Caco-2 (cell line): ENCODE measurements at regions of chr6 and their contacts with region 1.

Region 1: DNA sequence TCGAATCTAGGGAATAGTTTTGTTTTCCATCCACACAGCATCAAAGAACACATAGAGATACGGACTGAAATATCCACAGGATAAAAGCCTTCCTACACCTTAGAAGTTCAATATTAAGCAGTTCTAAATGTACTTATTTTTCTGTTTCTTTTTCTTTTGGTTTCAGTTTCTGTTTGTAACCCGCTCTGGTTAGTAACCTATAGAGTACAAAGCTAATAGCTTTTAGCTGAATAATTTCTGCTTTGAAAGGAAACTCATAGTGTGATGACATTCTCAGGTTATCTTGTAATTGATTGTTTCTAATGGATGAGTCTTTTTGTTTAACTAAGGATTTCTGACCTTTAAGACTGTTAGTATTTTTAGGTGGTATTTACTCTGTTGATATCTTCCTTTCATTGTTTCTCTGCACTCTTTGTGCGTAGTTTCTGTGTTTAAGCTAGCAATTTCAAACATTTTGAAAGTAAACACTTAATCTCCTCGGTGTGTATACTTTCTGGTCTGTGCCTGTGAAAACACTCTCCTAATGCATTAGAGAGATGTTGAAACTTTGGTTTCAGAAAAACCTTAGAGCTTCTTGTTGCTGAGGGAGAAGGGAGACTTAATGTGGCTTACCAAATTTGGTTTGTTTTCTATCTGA is 385.5 kb downstream of the HDGFL1 start:
- DNase-seq: peak in 1 of 2 experiments; percentile 51
- H3K4me3 ChIP-seq: 0 out of 2 replicates have a peak overlapping the region, but pooled peaks have one; percentile 13
- H3K4me3 Mint-ChIP-seq: peak overlapping the region; percentile 70
- H3K27ac Mint-ChIP-seq: peak overlapping the region; percentile 93
- H3K4me1 ChIP-seq: peaks cover 48% of the 10 kb centered on the region
- H3K4me1 Mint-ChIP-seq: peaks cover 34% of the 10 kb centered on the region
- H3K27me3 ChIP-seq: no peaks in the 10 kb centered on the region
- H3K27me3 Mint-ChIP-seq: no peaks in the 10 kb centered on the region
- CTCF ChIP-seq: no peak

Region 2: GRCh38 chr6:22424196-22424595 is 530.7 kb before region 1 on chr6:
- CTCF ChIA-PET with region 1: no interaction called
- POLR2A ChIA-PET with region 1: no interaction called
- intact Hi-C with region 1: no loop called
- DNase-seq: no peak
- H3K4me3 ChIP-seq: no peak overlapping the region
- H3K4me3 Mint-ChIP-seq: no peak overlapping the region
- H3K27ac Mint-ChIP-seq: no peak overlapping the region
- H3K4me1 ChIP-seq: 0 out of 2 replicates have a peak, but pooled peaks cover 6% of the 10 kb centered on the region
- H3K4me1 Mint-ChIP-seq: peaks cover 11% of the 10 kb centered on the region
- H3K27me3 ChIP-seq: no peaks in the 10 kb centered on the region
- H3K27me3 Mint-ChIP-seq: no peaks in the 10 kb centered on the region
- CTCF ChIP-seq: no peak

Region 3: DNA sequence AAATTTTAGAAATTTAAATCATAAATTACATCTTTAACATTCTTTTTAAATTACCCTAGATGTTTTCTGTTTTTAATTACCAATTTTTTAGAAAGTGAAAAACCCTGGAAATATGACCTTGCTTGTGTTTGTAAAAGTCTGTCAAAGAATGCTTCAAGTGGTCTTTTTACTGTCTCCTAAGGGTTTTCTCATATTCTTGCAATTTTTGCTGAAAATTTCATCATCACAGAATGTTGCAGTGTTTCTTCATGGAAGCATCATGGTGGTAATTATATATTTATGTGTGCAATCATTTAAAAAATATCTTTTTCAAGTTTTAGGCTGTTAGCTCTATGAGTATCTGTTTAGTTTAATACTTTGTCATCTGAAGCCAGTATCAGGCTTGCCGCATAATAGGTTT is 207.3 kb before region 1 on chr6:
- CTCF ChIA-PET with region 1: no interaction called
- POLR2A ChIA-PET with region 1: no interaction called
- intact Hi-C with region 1: loop called (anchors 1 kb)
- DNase-seq: no peak
- H3K4me3 ChIP-seq: no peak overlapping the region
- H3K4me3 Mint-ChIP-seq: no peak overlapping the region
- H3K27ac Mint-ChIP-seq: no peak overlapping the region
- H3K4me1 ChIP-seq: peaks cover 15% of the 10 kb centered on the region
- H3K4me1 Mint-ChIP-seq: peaks cover 18% of the 10 kb centered on the region
- H3K27me3 ChIP-seq: no peaks in the 10 kb centered on the region
- H3K27me3 Mint-ChIP-seq: no peaks in the 10 kb centered on the region
- CTCF ChIP-seq: no peak

Region 4: DNA sequence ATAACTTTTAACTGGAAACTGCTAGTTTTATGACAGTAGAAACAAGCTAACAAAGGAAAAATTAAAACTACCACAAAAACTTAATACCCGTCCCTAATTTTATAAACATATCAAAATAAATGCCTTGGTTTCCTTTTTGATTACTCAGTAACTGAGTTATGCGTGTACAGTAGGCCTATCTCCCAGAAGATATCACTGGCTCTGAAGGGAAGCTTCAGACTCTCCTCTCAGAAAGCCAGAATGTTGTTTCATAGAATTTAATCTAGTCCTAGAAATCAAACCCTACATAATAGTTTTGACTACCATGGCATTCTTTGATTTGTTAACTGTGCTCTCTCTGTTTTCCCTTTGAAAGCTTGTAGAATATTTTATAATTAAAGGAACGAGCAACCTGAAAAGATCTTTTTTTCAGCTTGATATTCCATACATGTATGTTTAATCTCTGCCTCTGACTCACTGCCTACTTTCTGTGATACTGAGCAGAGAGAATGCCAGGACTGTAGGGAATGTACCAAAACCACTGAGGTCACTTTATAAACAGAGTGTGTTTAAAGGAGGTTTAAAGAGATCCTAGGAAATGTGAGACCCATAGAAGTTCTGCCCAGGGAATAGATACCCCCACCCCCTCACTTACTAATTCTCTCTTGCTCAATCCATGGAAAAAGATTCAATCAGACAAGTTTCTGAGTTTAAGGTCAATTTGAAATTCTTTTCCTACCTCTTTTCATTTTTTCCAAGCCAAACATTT is 74.0 kb before region 1 on chr6:
- CTCF ChIA-PET with region 1: no interaction called
- POLR2A ChIA-PET with region 1: no interaction called
- intact Hi-C with region 1: loop called (anchors 1 kb)
- DNase-seq: peak; percentile 49 to 68
- H3K4me3 ChIP-seq: no peak overlapping the region
- H3K4me3 Mint-ChIP-seq: peak overlapping the region; percentile 67
- H3K27ac Mint-ChIP-seq: peak overlapping the region; percentile 77
- H3K4me1 ChIP-seq: peaks cover 59% of the 10 kb centered on the region
- H3K4me1 Mint-ChIP-seq: peaks cover 46% of the 10 kb centered on the region
- H3K27me3 ChIP-seq: no peaks in the 10 kb centered on the region
- H3K27me3 Mint-ChIP-seq: no peaks in the 10 kb centered on the region
- CTCF ChIP-seq: no peak

Region 5: DNA sequence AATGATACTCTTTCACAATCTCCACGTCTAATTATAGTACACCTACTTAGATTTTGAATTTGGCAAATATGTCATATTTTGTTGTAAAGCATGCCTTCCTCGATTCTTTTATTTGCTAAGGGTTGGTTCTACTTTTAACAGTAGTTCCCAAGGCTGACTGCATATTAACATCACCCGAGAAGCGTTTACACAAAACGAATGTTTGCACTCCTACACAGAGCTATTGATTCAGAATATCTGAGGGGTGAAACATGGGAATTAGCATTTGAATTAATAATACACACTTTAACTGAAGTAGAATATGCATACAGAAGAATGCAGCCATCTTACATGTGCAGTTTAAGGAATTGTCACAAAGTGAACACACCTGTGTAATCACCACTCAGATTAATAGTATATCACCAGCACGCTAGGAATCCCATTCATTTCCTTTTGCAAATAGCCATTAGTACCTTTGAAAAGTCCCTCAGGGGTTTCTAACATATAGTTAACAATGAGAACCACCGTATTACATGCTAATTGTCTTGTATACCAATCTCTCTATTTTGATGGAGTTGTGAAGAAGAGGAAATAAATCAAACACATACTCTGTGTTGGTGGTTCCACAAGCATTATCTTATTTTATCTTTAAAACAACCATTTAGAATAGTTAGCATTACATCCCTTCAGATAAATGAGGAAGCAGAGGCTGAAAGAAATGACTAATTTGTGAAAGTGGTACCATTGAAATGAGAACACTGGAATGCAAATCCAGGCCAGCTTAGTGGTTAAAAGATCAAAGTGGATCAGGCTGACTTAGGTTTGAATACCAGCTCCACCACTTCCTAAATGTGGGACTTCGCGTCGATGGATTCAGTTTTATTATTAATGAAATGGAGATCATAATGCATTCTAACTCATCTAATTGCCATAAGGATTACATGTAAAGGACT is 68.0 kb before region 1 on chr6:
- CTCF ChIA-PET with region 1: no interaction called
- POLR2A ChIA-PET with region 1: no interaction called
- intact Hi-C with region 1: loop called (anchors 2 kb)
- DNase-seq: peak in 1 of 2 experiments; percentile 43
- H3K4me3 ChIP-seq: no peak overlapping the region
- H3K4me3 Mint-ChIP-seq: peak overlapping the region; percentile 47
- H3K27ac Mint-ChIP-seq: peak overlapping the region; percentile 55
- H3K4me1 ChIP-seq: peaks cover 66% of the 10 kb centered on the region
- H3K4me1 Mint-ChIP-seq: peaks cover 30% of the 10 kb centered on the region
- H3K27me3 ChIP-seq: no peaks in the 10 kb centered on the region
- H3K27me3 Mint-ChIP-seq: no peaks in the 10 kb centered on the region
- CTCF ChIP-seq: no peak

Region 6: DNA sequence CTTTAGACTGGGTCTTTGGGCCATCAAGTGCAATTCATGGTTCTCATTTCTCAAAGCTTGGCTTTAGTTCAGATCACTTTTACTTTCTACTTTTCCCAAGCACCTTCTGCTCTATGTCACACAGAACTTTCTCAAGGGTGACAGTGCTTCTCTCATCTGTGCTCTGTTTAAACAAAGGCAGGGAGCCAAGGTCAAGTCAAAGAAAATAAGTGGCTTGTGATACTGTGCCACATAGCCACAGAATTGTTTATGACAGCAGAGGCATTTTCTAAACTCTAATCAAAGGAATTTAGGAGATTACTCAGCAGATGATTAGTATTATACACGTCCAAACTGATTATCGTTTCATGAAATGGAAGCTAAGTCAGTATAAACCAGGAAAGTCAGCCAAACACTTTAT is 37.5 kb before region 1 on chr6:
- CTCF ChIA-PET with region 1: no interaction called
- POLR2A ChIA-PET with region 1: interaction called, 3 read pairs
- intact Hi-C with region 1: loop called (anchors 1 kb)
- DNase-seq: no peak
- H3K4me3 ChIP-seq: peak overlapping the region; percentile 28
- H3K4me3 Mint-ChIP-seq: peak overlapping the region; percentile 84
- H3K27ac Mint-ChIP-seq: peak overlapping the region; percentile 34
- H3K4me1 ChIP-seq: peaks cover 10% of the 10 kb centered on the region
- H3K4me1 Mint-ChIP-seq: peaks cover 21% of the 10 kb centered on the region
- H3K27me3 ChIP-seq: no peaks in the 10 kb centered on the region
- H3K27me3 Mint-ChIP-seq: no peaks in the 10 kb centered on the region
- CTCF ChIP-seq: no peak

Region 7: DNA sequence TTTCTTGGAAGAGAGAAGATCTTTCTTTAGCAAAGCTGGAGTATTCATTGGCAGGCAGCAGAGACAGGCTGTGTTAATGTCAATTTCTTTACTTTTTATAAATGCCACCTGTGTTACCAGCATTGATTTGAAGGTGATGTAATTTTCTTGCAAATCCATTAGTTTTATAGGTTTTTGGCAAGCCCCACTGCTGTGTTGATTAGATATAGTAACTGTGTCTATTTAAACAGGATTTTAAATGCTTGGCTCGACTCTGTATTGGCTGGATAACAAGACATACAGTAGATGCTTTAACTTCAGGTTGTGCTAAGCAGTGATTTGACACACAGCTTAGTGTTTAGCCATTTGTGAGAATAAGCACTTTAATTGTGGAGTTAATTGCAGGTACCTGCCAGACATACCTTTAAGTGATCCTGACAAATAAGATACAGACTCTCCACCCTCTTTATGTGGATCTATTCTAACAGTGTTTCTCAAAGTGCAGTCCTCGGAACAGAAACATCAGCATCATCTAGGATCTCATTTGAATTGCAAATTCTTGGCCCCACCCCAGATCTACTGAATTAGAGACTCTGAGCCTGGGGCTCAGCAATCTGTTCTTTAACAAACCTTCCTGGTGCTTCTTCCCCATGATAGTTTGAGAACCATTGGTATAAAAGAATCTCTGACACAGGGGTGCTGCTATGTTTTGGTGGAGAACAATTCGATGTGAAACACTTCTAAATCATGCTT is 12.0 kb after region 1 on chr6:
- CTCF ChIA-PET with region 1: no interaction called
- POLR2A ChIA-PET with region 1: no interaction called
- intact Hi-C with region 1: no loop called
- DNase-seq: no peak
- H3K4me3 ChIP-seq: no peak overlapping the region
- H3K4me3 Mint-ChIP-seq: no peak overlapping the region
- H3K27ac Mint-ChIP-seq: no peak overlapping the region
- H3K4me1 ChIP-seq: no peaks in the 10 kb centered on the region
- H3K4me1 Mint-ChIP-seq: no peaks in the 10 kb centered on the region
- H3K27me3 ChIP-seq: no peaks in the 10 kb centered on the region
- H3K27me3 Mint-ChIP-seq: no peaks in the 10 kb centered on the region
- CTCF ChIP-seq: no peak